Esophagus squamous epithelium (tissue), 5 donors: ENCODE measurements at regions of chr12 and their contacts with region 1.

Region 1: DNA sequence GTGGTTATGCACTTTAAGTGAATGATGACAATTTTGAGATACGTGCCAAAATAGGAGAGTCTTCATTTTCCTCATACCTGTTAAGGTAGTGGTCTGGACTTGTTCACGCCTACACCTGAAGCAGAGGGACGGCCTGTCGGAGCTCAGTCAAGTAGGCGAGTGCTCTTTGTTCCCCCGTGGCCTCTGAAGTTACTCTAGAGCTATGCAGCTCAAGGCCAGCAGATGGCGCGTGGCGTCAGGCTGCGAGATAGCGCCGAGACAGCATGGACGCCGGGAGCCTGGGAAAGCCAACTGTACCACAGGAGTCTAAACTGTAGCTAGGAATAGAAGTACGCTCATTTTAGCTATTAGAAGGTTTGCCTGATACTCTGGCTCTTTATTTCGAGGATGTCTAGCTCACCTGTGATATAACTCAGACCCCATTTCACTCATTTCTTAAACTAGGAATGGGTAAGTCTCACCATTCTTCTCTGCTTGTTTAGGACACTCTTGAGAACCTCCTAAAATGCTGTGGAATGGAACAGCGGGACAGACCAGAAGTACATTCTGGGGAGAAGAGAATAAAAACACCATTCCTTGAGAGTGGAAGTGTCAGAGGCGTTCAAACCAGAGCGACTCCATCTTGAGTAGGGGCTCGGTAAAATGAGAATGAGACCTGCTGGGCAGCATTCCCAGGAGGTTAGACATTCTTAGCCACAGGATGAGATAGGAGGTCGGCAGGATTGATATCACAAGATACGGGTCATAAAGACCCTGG is 267.4 kb upstream of the HMGA2 start:
- DNase-seq: peak; percentile 0
- H3K4me3 ChIP-seq: no peak overlapping the region
- H3K27ac ChIP-seq: no peak overlapping the region
- H3K4me1 ChIP-seq: peaks cover 0 to 10% (median 4%) of the 10 kb centered on the region in 3 donors
- H3K27me3 ChIP-seq: no peaks in the 10 kb centered on the region
- CTCF ChIP-seq: peak; percentile 41 to 93 (median 86)
- POLR2A ChIP-seq: no peak

Region 2: GRCh38 chr12:65403188-65403587 is 153.7 kb before region 1 on chr12:
- intact Hi-C with region 1: no loop called
- DNase-seq: no peak
- H3K4me3 ChIP-seq: no peak overlapping the region
- H3K27ac ChIP-seq: no peak overlapping the region
- H3K4me1 ChIP-seq: no peaks in the 10 kb centered on the region
- H3K27me3 ChIP-seq: no peaks in the 10 kb centered on the region
- CTCF ChIP-seq: no peak
- POLR2A ChIP-seq: no peak

Region 3: DNA sequence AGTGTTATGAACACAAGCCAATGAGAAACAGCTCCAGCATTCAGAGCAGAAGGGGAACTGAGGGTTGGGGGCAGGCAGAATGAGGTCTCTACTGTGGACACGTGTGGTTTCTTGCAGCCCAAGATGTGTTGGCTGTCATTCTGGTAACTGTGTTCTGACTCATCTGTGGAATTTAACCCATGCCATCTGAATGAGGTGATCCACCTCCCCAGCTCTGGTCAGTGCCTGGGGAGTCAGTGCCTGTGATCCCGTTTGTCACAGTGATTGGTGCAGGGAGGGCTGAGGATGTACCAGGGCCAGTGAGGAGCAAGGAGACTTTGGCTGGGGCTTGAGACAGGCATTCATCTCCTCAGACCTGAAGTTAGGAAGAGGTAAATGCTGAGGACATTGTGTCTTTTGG is 61.6 kb before region 1 on chr12:
- intact Hi-C with region 1: no loop called
- DNase-seq: no peak
- H3K4me3 ChIP-seq: no peak overlapping the region
- H3K27ac ChIP-seq: no peak overlapping the region
- H3K4me1 ChIP-seq: no peaks in the 10 kb centered on the region
- H3K27me3 ChIP-seq: peaks cover 0 to 7% (median 0%) of the 10 kb centered on the region in 4 donors
- CTCF ChIP-seq: no peak
- POLR2A ChIP-seq: no peak

Region 4: DNA sequence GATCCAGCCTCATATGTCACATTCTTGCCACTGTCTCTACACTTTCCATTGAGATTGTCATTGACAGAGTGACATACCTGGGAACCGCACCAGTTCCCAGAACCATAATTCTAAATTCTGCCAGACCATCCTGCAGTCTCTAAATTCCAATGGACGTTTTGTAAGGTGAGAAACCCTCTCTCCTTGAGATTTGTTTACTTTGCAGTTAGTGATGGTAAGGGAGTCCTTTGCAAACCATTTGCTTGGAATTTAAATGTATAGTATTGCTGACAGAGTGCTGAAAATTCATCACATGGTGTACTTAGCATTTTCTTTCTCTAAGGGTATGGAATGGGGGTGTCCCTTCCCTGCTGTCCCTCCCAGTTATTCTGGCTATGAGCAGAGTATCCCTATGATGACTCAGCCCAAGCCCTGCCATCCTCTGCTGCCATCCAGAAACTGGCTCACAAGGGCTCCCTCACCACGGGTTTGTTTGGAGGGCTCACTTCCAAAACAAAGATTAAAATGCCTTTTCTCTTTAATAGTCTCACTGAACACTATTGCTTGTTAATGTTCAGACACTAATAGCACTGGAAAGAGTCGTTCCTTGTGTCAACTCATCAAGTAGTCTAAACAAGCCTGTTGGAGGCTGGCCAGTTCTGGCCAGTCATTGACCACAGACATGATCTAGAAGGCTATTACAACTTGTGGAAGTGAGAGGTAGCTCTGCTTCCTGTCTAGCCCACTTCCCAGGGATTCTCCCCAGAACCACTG is 138.4 kb after region 1 on chr12:
- intact Hi-C with region 1: loop called (anchors 10 kb)
- DNase-seq: no peak
- H3K4me3 ChIP-seq: no peak overlapping the region
- H3K27ac ChIP-seq: no peak overlapping the region
- H3K4me1 ChIP-seq: peaks cover 0 to 7% (median 5%) of the 10 kb centered on the region in 3 donors
- H3K27me3 ChIP-seq: no peaks in the 10 kb centered on the region
- CTCF ChIP-seq: no peak
- POLR2A ChIP-seq: no peak

Region 5: GRCh38 chr12:65986047-65986446 is 429.2 kb after region 1 on chr12:
- intact Hi-C with region 1: loop called (anchors 10 kb)
- DNase-seq: no peak
- H3K4me3 ChIP-seq: no peak overlapping the region
- H3K27ac ChIP-seq: no peak overlapping the region
- H3K4me1 ChIP-seq: no peaks in the 10 kb centered on the region
- H3K27me3 ChIP-seq: no peaks in the 10 kb centered on the region
- CTCF ChIP-seq: no peak
- POLR2A ChIP-seq: no peak